Activated T-helper 2 cell treated with anti-CD3 and anti-CD28 coated beads, Interferon-gamma antibody, Interleukin-2, Interleukin-4, amounts not matched to agents 10 μg/mL and 5 μg/mL and 100 μg/mL, durations not matched to agents 14 hours and 24 hours and 36 hours (primary cell): ENCODE measurements at regions of chr11 and their contacts with region 1.

Region 1: GRCh38 chr11:108121274-108122155 is at the start of gene ACAT1:
- DNase-seq: peak; percentile 95
- H3K4me3 Mint-ChIP-seq: peak within 1 kb of the TSS; percentile 95
- H3K27ac Mint-ChIP-seq: peak within 1 kb of the TSS; percentile 90
- H3K4me1 Mint-ChIP-seq: peaks cover 40% of the 10 kb centered on the region
- H3K27me3 Mint-ChIP-seq: no peaks in the 10 kb centered on the region
- total RNA-seq, gene ACAT1: 66.8 and 76.6 TPM in 2 replicates

Region 2: GRCh38 chr11:107385361-107385982 is 736.0 kb before region 1 on chr11:
- intact Hi-C with region 1: no loop called
- DNase-seq: no peak
- H3K4me3 Mint-ChIP-seq: no peak overlapping the region
- H3K27ac Mint-ChIP-seq: no peak overlapping the region
- H3K4me1 Mint-ChIP-seq: no peaks in the 10 kb centered on the region
- H3K27me3 Mint-ChIP-seq: no peaks in the 10 kb centered on the region

Region 3: GRCh38 chr11:108008656-108009496 is 112.6 kb before region 1 on chr11 and contains the start of gene CUL5:
- intact Hi-C with region 1: loop called (anchors 5 kb)
- DNase-seq: peak; percentile 86
- H3K4me3 Mint-ChIP-seq: peak within 1 kb of the TSS; percentile 91
- H3K27ac Mint-ChIP-seq: peak within 1 kb of the TSS; percentile 94
- H3K4me1 Mint-ChIP-seq: peaks cover 16% of the 10 kb centered on the region
- H3K27me3 Mint-ChIP-seq: no peaks in the 10 kb centered on the region
- total RNA-seq, gene CUL5: 33.7 and 34.2 TPM in 2 replicates

Region 4: GRCh38 chr11:108237058-108237481 is 115.6 kb after region 1 on chr11:
- intact Hi-C with region 1: loop called (anchors 2 kb)
- DNase-seq: no peak
- H3K4me3 Mint-ChIP-seq: peak overlapping the region; percentile 66
- H3K27ac Mint-ChIP-seq: peak overlapping the region; percentile 83
- H3K4me1 Mint-ChIP-seq: peaks cover 59% of the 10 kb centered on the region
- H3K27me3 Mint-ChIP-seq: no peaks in the 10 kb centered on the region

Region 5: DNA sequence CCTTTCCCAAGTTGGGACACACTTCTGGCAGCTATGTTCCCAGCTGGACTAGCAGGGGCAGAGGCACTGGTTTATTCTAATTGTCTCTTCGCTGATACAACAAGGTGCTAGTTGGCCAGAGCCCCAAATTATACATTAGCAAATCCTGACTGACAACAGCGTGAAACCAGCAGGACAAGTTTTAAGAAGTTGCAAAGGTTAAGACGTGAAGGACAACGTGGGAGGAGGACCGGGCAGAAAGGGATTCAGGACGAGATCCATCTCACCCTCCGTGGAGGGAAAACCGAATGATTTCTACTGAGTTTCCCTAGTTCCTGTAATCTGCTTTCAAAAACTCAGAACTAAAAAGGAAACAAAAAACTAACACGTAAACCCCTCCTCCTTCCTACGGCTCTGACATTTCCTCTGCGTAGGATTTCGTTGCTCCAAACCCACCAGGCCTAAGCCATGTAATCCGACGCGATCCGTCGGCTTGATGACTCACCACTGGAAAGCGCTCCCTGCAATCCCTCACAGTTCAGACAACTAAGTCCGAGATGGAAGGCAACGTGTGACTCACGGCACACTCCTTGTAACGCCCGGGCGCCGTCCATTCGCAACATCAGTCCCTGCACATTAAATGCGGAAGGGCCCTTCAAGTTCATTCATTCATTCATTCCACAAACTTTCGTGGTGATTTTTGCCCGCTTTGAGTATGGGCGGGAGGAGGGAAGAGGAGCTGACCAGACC is 376.0 kb after region 1 on chr11:
- intact Hi-C with region 1: loop called (anchors 5 kb)
- DNase-seq: peak; percentile 68
- H3K4me3 Mint-ChIP-seq: peak overlapping the region; percentile 93
- H3K27ac Mint-ChIP-seq: peak overlapping the region; percentile 98
- H3K4me1 Mint-ChIP-seq: peaks cover 23% of the 10 kb centered on the region
- H3K27me3 Mint-ChIP-seq: peaks cover 4% of the 10 kb centered on the region

Region 6: GRCh38 chr11:108654994-108655631 is 533.6 kb after region 1 on chr11:
- intact Hi-C with region 1: loop called (anchors 2 kb)
- DNase-seq: no peak
- H3K4me3 Mint-ChIP-seq: no peak overlapping the region
- H3K27ac Mint-ChIP-seq: no peak overlapping the region
- H3K4me1 Mint-ChIP-seq: no peaks in the 10 kb centered on the region
- H3K27me3 Mint-ChIP-seq: peaks cover 35% of the 10 kb centered on the region

Region 7: GRCh38 chr11:109512680-109513079 is 1391.2 kb after region 1 on chr11:
- intact Hi-C with region 1: no loop called
- DNase-seq: no peak
- H3K4me3 Mint-ChIP-seq: no peak overlapping the region
- H3K27ac Mint-ChIP-seq: no peak overlapping the region
- H3K4me1 Mint-ChIP-seq: no peaks in the 10 kb centered on the region
- H3K27me3 Mint-ChIP-seq: no peaks in the 10 kb centered on the region